ENCODE measurements at regions of chr6 and their contacts with region 1.

Region 1: DNA sequence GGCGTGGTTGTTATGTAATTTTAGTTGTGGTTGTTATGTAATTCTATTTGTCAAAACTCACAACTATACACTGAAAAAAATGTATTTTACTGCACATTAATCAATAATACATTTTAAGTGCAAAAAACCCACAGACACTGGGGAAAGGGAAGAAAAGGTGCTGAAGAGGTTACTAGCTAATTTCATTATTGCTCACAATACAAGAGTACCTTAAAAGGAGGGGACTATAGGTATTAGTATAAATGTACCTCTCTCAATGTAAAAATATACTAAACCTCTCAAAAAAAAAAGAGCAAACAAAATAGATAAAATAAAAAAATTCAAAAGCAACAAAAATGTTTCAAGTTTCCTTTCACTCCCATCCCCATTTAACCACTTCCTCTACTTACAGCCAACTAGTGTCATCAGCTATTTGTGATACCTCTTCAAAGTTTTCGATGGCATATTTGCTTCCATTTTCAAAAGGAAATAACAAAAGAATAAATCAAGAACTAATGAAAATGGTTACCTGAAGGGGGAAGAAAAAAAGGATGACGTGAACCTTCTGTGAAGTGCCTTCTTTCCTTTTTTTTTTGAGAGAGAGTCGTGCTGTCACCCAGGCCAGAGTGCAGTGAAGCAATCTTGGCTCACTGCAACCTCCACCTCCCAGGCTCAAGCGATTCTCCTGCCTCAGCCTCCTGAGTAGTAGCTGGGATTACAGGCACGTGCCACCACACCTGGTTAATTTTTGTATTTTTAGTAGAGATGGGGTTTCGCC is 30.2 kb downstream of the RANBP9 start:
- DNase-seq: no peak
- H3K4me3 Mint-ChIP-seq: peak overlapping the region; percentile 60
- H3K27ac Mint-ChIP-seq: peak overlapping the region; percentile 86
- H3K4me1 Mint-ChIP-seq: peaks cover 52% of the 10 kb centered on the region
- H3K27me3 Mint-ChIP-seq: no peaks in the 10 kb centered on the region

Region 2: GRCh38 chr6:13641315-13641714 is 40.2 kb before region 1 on chr6:
- CTCF ChIA-PET with region 1: no interaction called
- POLR2A ChIA-PET with region 1: no interaction called
- intact Hi-C with region 1: loop called (anchors 2 kb)
- DNase-seq: no peak
- H3K4me3 Mint-ChIP-seq: no peak overlapping the region
- H3K27ac Mint-ChIP-seq: peak overlapping the region; percentile 76
- H3K4me1 Mint-ChIP-seq: peaks cover 36% of the 10 kb centered on the region
- H3K27me3 Mint-ChIP-seq: no peaks in the 10 kb centered on the region

Region 3: GRCh38 chr6:13696226-13696625 is 14.7 kb after region 1 on chr6:
- CTCF ChIA-PET with region 1: interaction called, 3 read pairs
- POLR2A ChIA-PET with region 1: no interaction called
- intact Hi-C with region 1: loop called (anchors 2 kb)
- DNase-seq: no peak
- H3K4me3 Mint-ChIP-seq: no peak overlapping the region
- H3K27ac Mint-ChIP-seq: peak overlapping the region; percentile 40
- H3K4me1 Mint-ChIP-seq: peaks cover 66% of the 10 kb centered on the region
- H3K27me3 Mint-ChIP-seq: no peaks in the 10 kb centered on the region